Panc1 (cell line): ENCODE measurements at regions of chr11 and their contacts with region 1.

Region 1: GRCh38 chr11:78057462-78058055 is 6.1 kb upstream of the THRSP start:
- DNase-seq: no peak
- ATAC-seq: no peak
- H3K4me3 ChIP-seq: no peak overlapping the region
- H3K27ac ChIP-seq: no peak overlapping the region
- H3K4me1 ChIP-seq: peaks cover 12% of the 10 kb centered on the region
- H3K27me3 ChIP-seq: no peaks in the 10 kb centered on the region
- CTCF ChIP-seq: no peak

Region 2: GRCh38 chr11:77734890-77735289 is 322.7 kb before region 1 on chr11:
- CTCF ChIA-PET with region 1: no interaction called
- POLR2A ChIA-PET with region 1: no interaction called
- in situ Hi-C with region 1: no loop called
- intact Hi-C with region 1: no loop called
- DNase-seq: no peak
- ATAC-seq: no peak
- H3K4me3 ChIP-seq: no peak overlapping the region
- H3K27ac ChIP-seq: no peak overlapping the region
- H3K4me1 ChIP-seq: no peaks in the 10 kb centered on the region
- H3K27me3 ChIP-seq: no peaks in the 10 kb centered on the region
- CTCF ChIP-seq: no peak

Region 3: GRCh38 chr11:78045851-78046485 is 11.6 kb before region 1 on chr11:
- CTCF ChIA-PET with region 1: interaction called, 11 read pairs
- POLR2A ChIA-PET with region 1: no interaction called
- in situ Hi-C with region 1: no loop called
- intact Hi-C with region 1: no loop called
- DNase-seq: no peak
- ATAC-seq: peak; percentile 96
- H3K4me3 ChIP-seq: peak overlapping the region; percentile 41 to 73
- H3K27ac ChIP-seq: peak overlapping the region; percentile 79; the same call in 1 of the 2 replicates
- H3K4me1 ChIP-seq: peaks cover 5% of the 10 kb centered on the region; the same call in 1 of the 2 replicates
- H3K27me3 ChIP-seq: no peaks in the 10 kb centered on the region
- CTCF ChIP-seq: peak; percentile 100

Region 4: DNA sequence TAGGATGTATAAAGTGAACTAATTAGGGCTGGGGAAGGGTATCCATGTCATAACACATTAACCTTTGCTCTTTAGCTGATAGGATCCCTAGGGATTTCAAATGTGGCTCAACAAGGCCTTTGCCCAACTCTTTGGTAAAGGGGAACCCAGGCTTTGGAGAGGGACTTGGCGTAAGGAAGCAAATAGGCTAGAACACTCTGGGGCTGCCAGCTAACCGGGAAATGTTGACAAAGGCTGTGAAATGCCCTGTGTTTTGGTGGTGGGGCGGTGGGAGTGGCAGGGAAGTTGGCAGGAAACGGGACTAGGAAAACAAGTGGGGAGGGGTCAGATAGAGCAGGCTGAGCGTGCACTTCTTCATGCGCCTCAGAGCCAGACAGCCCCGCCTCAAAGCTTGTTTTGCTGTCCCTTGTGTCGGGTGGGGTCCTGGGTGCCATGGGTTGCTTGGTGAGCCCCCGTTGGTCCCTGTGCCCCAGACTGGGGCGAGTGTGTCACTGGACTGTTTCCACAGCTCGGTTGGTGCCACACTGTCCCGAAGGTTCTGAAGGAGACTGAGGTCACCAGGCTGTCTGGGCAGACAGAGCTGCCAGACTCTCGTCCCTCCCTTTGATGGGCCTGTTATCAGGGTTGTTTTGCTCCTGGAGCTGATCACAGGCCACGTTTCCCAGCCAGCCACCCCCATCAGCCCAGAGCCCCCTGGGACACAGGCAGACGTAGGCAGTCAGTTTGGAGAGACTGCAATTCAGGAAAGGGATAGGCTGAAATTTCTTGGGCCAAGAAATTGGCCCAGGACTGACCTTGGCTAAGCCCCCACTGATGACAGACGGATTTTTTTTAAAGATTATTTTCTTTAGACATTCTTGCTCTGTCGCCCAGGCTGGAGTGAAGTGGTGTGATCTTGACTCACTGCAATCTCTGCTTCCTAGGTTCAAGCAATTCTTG is 111.2 kb after region 1 on chr11:
- CTCF ChIA-PET with region 1: no interaction called
- POLR2A ChIA-PET with region 1: no interaction called
- in situ Hi-C with region 1: no loop called
- intact Hi-C with region 1: no loop called
- DNase-seq: no peak
- ATAC-seq: no peak
- H3K4me3 ChIP-seq: no peak overlapping the region
- H3K27ac ChIP-seq: no peak overlapping the region
- H3K4me1 ChIP-seq: no peaks in the 10 kb centered on the region
- H3K27me3 ChIP-seq: no peaks in the 10 kb centered on the region
- CTCF ChIP-seq: no peak